Activated naive CD4-positive, alpha-beta T cell treated with anti-CD3 and anti-CD28 coated beads for 36 hours (primary cell): ENCODE measurements at regions of chr2 and their contacts with region 1.

Region 1: DNA sequence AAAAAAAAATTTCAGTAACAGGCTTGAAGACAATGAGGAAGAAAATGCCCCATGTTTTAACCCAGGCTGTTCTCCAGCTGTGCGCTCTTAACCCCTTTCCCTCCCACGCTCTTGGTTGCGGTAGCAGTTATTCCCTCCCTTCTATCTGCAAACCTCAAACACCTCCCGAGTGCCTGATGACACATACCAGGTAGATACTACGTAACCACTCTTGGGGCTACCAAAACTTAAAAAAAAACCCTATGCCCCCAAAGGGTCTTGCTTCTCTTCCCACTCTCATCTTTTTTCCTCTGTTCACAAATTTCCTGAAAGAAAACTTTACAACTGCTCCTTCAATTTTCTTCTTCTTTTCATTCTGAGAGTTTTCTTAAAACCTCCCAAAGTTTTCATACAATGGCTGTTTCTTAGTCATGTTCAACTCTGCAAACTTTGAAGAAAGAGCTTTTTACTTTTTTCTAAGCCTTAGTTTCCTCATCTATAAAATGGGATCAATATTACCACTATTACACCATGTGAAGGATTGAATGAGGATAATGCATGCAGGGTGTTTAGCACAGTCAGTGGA is 4.9 kb upstream of the DRC1 start:
- DNase-seq: peak; percentile 69
- H3K4me3 Mint-ChIP-seq: no peak overlapping the region
- H3K27ac Mint-ChIP-seq: peak overlapping the region; percentile 4
- H3K4me1 Mint-ChIP-seq: peaks cover 19% of the 10 kb centered on the region
- H3K27me3 Mint-ChIP-seq: no peaks in the 10 kb centered on the region

Region 2: GRCh38 chr2:26345545-26346453 is 51.0 kb before region 1 on chr2 and contains the start of gene SELENOI:
- CTCF ChIA-PET with region 1: no interaction called
- intact Hi-C with region 1: loop called (anchors 2 kb)
- DNase-seq: peak; percentile 99
- H3K4me3 Mint-ChIP-seq: peak within 1 kb of the TSS; percentile 90
- H3K27ac Mint-ChIP-seq: peak within 1 kb of the TSS; percentile 94
- H3K4me1 Mint-ChIP-seq: peaks cover 27% of the 10 kb centered on the region
- H3K27me3 Mint-ChIP-seq: no peaks in the 10 kb centered on the region
- total RNA-seq, gene SELENOI: 20.0 to 22.9 TPM

Region 3: GRCh38 chr2:26355038-26355995 is 41.5 kb before region 1 on chr2:
- CTCF ChIA-PET with region 1: no interaction called
- intact Hi-C with region 1: loop called (anchors 5 kb)
- DNase-seq: no peak
- H3K4me3 Mint-ChIP-seq: no peak overlapping the region
- H3K27ac Mint-ChIP-seq: no peak overlapping the region
- H3K4me1 Mint-ChIP-seq: peaks cover 62% of the 10 kb centered on the region
- H3K27me3 Mint-ChIP-seq: no peaks in the 10 kb centered on the region